A549 (cell line): ENCODE measurements at regions of chr1 and their contacts with region 1.

Region 1: GRCh38 chr1:85576642-85577418 is 3.7 kb upstream of the CCN1 start:
- DNase-seq: peak; percentile 43 to 84
- ATAC-seq: peak; percentile 55 to 64
- H3K4me3 ChIP-seq: peak overlapping the region; percentile 78
- H3K27ac ChIP-seq: peak overlapping the region; percentile 99 to 100
- H3K4me1 ChIP-seq: peaks cover 43% of the 10 kb centered on the region
- CTCF ChIP-seq: peak; percentile 60
- EP300 ChIP-seq: no peak
- POLR2A ChIP-seq: peak; percentile 34; the same call in 1 of the 2 replicates
- RAD21 ChIP-seq: peak; percentile 10 to 50; a peak in 2 of 5 replicates

Region 2: GRCh38 chr1:85464497-85465098 is 112.2 kb before region 1 on chr1:
- CTCF ChIA-PET with region 1: interaction called, 5 read pairs
- POLR2A ChIA-PET with region 1: interaction called, 16 read pairs
- DNase-seq: peak; percentile 27 to 55
- ATAC-seq: peak; percentile 81 to 83
- H3K4me3 ChIP-seq: peak overlapping the region; percentile 70
- H3K27ac ChIP-seq: peak overlapping the region; percentile 89 to 98
- H3K4me1 ChIP-seq: peaks cover 33% of the 10 kb centered on the region
- CTCF ChIP-seq: no peak
- EP300 ChIP-seq: no peak
- POLR2A ChIP-seq: peak; percentile 24; the same call in 1 of the 2 replicates
- RAD21 ChIP-seq: no peak; a peak in 2 of 5 replicates

Region 3: DNA sequence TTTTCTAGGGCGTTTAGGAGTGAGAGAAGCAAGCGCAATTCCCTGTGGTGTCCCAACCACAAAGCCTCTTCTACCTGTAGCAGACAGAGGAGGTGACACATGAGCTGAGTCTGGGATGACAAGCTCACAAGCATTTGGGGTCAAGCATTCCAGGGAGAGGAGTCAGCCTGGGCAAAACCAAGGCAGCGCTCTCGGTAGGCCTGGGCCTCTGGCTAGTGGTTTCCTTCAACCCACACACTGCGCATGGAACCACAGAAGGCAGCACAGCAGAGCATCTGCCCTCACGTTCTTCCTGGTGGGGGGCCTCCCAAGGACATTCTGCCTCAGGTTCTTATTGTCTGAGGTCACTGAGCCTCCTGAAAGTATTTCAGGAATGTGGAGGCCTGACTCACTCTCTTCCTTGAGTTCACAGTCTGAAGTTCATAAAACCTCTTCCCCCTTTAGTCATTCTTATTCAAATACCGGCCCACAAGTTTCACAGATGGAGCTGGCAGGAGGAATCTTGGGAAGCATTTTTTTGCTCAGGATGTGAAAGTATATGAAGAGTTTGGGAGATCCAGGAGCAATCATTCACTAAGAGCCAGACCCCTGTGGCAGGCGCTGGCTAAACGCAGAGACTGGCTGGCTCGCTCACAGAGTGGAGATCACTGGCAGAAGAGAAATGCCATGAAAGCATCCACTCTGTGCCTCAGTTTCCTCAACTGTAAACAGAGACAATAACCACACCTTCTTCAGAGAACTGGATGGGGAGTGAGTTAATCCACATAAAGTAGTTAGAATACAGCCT is 30.5 kb after region 1 on chr1:
- CTCF ChIA-PET with region 1: interaction called, 8 read pairs
- POLR2A ChIA-PET with region 1: interaction called, 26 read pairs
- DNase-seq: peak; percentile 82 to 92
- ATAC-seq: peak; percentile 89 to 90
- H3K4me3 ChIP-seq: no peak overlapping the region
- H3K27ac ChIP-seq: peak overlapping the region; percentile 91 to 92
- H3K4me1 ChIP-seq: peaks cover 73% of the 10 kb centered on the region
- CTCF ChIP-seq: no peak
- EP300 ChIP-seq: peak; percentile 79 to 93; a peak in 4 of 5 replicates
- POLR2A ChIP-seq: no peak
- RAD21 ChIP-seq: peak; percentile 17 to 44; a peak in 3 of 5 replicates

Region 4: GRCh38 chr1:85612704-85613361 is 36.0 kb after region 1 on chr1:
- CTCF ChIA-PET with region 1: interaction called, 8 read pairs
- POLR2A ChIA-PET with region 1: interaction called, 26 read pairs
- DNase-seq: peak; percentile 35 to 73
- ATAC-seq: peak; percentile 79 to 85
- H3K4me3 ChIP-seq: no peak overlapping the region
- H3K27ac ChIP-seq: peak overlapping the region; percentile 79 to 86
- H3K4me1 ChIP-seq: peaks cover 55% of the 10 kb centered on the region
- CTCF ChIP-seq: peak; percentile 55
- EP300 ChIP-seq: peak in 1 of 2 experiments; percentile 16; a peak in 1 of 5 replicates
- POLR2A ChIP-seq: no peak
- RAD21 ChIP-seq: peak; percentile 72 to 77

Region 5: GRCh38 chr1:85628791-85629531 is 52.1 kb after region 1 on chr1:
- CTCF ChIA-PET with region 1: interaction called, 7 read pairs
- POLR2A ChIA-PET with region 1: interaction called, 21 read pairs
- DNase-seq: peak; percentile 73 to 89
- ATAC-seq: peak; percentile 98 to 99
- H3K4me3 ChIP-seq: peak overlapping the region; percentile 24; the same call in 1 of the 3 replicates
- H3K27ac ChIP-seq: peak overlapping the region; percentile 93 to 94
- H3K4me1 ChIP-seq: peaks cover 26% of the 10 kb centered on the region
- CTCF ChIP-seq: no peak
- EP300 ChIP-seq: no peak
- POLR2A ChIP-seq: no peak; the same call in 1 of the 2 replicates
- RAD21 ChIP-seq: peak; percentile 1 to 28; a peak in 4 of 5 replicates